Posterior cingulate gyrus (tissue), 11 donors: ENCODE measurements at regions of chr2 and their contacts with region 1.

Region 1: DNA sequence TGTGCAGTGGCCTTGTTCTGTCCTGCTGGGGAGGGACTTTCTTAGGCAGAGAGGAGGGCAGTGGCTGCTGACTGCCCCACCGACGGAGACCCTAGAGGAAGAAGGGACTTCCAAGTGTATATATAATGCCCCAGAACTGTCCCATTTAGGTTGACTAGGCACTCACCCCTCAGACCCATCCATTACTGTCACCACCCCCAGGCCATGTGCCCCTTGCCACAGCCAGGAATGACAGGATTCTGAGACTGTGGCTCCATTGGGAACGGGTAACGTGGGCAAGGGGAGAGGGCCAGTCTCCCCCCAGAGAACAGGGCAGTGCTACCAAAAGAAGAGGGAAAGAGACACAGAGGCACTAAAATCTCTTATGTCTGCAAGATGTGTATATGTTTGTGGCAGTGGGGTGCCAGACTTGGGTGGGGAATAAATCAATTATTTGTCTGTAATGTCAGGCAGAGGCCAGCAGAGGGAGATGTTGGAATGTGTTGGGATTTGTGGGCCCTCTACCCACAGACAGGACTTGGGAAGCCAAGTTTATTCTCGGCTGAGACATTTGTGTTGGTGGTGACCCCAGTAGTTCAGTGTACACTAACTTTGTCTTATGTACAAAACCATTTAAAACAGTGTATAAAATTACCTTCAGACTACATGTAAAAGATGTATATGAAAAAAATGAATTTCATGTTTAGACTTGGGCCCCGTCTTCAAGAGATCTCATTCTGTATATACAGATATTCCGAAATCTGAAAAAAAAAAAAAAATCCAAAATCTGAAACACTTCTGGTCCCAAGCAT is 24.0 kb upstream of the TMEM37 start:
- DNase-seq: peak in 3 of 10 donors; percentile 31 to 43 (median 42)

Region 2: DNA sequence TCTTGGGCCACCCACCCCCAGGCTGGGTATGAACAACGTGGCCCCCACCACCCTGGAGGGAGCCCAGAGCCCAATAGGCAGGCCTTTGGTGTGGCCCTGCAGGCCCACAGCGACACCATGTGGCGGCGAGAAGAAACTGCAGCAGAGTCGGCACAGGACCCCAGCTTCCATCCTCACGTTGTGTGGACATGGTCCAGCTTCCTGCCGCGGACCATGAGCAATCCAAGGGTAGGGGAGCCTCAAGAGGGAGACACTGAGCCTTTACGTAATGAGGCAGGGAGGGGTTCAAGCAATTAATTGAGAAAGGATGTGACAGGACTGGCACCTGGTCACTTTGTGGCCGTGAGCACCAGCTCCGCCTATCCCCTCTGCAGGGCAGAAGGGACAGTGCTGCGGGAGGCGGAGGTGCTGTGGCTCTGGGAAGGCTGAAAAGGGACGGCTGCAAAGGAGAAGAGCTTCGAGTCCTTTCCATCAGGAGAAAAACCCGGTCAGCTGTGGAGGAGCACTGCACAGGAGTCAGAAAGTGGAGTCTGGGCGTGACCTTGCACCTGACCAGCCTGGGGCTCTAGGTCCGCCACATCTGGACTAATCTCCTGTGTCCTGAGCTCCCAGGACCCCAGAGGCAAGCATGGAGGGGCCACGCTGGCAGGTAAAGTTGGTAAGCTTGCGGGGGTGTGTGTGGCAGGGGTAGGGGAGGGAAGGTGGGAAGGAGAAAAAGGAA is 68.8 kb after region 1 on chr2:
- intact Hi-C with region 1: loop called (anchors 1 kb)
- DNase-seq: peak in 7 of 10 donors; percentile 37 to 94 (median 62)

Region 3: DNA sequence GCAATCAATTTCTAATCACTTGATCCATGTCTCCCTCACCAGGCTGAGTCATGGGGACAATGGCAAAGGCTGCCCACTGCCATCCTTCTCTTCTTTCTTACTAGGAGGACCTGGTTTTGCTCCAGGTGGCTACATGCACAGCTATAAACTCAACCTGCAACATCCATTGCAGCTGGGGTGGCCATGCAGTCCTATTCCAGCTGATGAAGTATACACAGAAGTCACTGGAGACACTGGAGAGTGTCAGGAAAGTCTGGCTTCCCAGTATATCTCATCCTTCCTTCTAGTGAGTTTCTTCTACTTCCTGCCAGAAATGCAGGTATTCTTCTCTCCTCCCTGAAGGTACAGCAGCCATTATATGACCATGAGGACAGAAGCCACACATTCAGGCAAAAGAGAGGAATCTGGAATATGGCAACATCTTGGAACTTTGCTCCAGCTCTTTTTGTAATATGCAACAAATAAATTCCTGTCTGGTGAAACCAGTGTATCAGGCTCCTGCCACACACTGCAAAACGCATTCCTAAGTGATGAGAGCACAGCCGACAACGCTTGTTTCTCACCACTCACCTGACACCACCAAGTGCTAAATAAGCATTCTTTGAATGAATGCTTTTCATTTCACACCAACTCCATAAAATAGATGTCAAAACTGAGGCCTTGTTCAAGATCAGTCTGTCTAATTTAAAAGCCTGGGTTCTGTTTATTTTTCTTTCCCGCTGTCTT is 84.3 kb after region 1 on chr2:
- intact Hi-C with region 1: no loop called
- DNase-seq: no peak

Region 4: DNA sequence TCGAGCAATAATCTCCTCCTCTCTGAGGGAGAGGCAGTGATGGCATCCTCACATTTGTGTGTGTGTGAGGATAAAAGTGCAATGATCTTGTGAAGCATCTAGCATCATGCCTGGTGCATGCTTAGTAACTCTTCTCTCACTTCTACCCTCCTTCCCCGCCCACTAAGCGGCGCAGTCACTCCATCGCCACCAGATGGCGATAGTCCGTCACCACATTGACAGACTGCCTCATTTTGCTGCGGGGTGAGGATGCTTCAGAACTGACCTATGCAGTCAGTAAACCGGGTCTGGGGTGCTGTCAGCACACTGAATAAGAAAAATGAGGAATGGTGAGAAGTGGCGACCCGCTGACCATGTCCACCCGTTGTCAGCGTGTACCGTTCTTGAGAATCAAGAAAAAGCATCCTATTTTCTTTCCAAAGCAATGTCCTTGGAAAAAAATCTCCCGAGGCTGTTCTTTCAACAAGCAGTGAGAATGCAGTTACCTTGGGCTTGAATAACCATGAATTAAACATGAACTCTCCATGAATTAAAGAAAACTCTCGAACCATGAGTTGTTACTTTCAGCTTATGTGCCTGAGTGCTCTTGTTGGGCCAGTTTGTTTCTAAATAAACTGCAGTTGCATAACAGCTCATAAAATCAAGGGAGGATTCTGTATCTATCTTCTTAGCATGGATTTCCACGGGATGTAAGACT is 234.1 kb after region 1 on chr2:
- intact Hi-C with region 1: loop called (anchors 10 kb)
- DNase-seq: peak; percentile 63 to 97 (median 84)

Region 5: DNA sequence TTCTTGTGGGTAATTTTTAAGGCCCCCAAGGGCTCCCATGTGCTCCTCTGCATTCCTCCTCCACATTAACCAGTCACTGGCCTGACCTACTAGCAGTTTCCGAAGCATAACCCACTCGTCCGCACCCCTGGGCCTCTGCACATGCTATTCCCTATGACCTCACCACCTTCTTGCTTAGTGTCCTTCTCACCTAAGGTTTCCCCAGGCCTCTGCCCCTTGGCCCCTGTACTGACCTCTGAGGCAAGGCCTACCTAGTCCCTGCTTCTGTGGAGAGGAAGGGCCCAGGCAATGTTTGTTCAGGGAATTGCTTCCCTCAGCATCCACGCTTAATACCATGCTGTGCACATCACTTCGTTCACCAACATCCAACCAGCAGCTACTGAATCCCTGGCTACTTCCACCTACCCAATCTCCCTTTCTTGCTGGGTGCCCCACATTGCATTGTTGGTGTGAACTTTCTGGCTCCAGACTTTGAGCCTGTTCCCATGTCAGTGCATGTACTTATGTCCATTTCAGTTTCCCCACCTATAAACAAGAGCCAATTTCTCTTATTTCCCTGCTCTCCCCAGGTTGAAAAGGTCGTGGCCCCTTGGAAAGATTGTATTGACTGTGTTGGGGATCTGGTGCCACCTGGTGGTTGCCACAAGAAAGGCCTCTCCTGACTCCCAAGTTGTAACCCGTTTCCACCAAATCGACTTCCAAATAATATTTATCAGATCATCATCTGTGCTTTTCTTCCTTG is 252.1 kb after region 1 on chr2:
- intact Hi-C with region 1: loop called (anchors 5 kb)
- DNase-seq: peak in 5 of 10 donors; percentile 22 to 87 (median 57)